Caki2 (cell line): ENCODE measurements at regions of chr15 and their contacts with region 1.

Region 1: DNA sequence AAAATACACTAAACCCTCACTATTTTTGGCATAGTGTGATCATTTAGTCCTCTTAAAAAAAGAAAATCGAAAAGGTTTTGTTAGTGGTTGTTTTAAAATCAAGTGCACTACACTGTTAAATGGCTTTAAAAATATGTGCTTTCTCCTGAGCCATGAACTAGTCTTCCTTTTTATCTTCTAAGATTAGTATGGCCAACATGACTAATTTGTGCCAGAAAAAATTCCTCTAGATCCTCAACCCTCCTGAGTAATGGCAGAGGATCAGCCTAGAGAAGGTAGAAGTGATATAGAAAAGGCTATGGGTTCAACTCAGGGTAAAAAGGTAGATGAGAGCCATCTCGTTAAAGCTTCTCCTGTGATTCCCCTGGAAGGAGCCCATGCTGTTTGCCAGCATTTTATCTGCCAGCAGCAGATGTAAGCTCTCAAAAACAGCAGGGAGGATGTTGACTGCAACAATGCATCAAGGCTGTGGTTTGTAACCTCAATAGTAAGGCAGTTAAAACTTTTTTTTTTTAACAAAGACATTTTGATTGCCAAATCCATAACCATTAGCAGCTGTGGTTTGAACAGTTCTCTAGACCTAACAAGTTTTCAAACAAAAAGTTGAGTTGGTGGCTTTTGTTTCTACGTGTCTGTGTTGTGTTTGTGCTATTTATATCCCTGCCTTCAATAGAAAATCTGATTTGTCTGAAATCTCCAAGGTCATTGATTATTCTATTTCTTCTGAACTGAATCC is 30.2 kb upstream of the ZNF609 start:
- DNase-seq: no peak

Region 2: GRCh38 chr15:64256051-64256450 is 174.1 kb before region 1 on chr15:
- in situ Hi-C with region 1: no loop called
- DNase-seq: no peak

Region 3: GRCh38 chr15:64315136-64315660 is 115.0 kb before region 1 on chr15:
- in situ Hi-C with region 1: no loop called
- DNase-seq: no peak

Region 4: GRCh38 chr15:64381000-64381752 is 49.0 kb before region 1 on chr15 and contains the start of gene PCLAF:
- in situ Hi-C with region 1: no loop called
- DNase-seq: peak; percentile 87
- total RNA-seq, gene PCLAF: 73.7 and 79.2 TPM in 2 replicates

Region 5: GRCh38 chr15:64681424-64682024 is 251.4 kb after region 1 on chr15:
- in situ Hi-C with region 1: loop called (anchors 10 kb)
- DNase-seq: peak; percentile 61